HEK293 (cell line): ENCODE measurements at regions of chr19 and their contacts with region 1.

Region 1: DNA sequence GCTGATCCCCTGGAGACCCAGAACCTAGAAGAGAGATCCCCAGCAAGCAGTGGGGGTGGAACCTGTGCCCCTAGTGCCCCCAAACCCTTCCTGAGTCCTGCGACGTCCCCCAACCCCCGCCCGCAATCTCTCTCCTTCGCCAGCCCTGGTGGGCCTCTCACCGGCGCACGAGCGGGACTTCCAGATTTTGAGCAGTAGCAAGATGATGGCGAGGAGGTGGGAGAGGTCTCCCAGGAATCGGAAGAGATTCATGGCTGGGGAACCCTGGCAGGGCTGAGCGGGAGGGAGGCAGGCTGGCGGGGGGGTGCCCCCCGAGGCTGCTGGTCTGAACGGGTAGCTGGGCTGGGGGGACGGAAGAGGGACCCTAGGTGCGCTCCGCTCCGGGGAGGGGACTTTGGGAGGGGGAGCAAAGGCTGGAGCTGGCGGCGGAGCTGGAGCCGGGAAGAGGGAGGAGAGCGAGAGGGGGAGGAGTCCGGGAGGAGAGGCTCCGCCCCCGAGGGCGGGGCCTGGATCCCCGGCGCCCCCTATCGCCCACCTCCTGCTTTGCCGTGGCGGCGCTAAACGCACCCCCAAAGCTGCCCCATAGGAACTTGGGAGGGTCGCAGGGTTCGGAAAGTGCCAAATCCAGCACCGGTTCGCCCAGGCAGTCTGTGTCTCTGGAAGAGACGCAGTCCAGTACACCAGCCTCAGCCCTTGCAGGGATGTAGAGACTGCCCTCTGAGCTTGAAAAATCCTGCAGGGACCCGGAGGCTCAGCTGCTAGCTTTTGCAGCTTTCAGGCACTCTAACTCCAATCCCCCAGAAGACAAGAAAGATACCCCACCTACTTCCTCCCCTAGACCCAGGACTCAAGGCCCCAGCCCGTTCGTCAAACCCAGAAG is at the start of gene KDELR1:
- H3K4me3 ChIP-seq: peak within 1 kb of the TSS; percentile 86
- H3K27ac ChIP-seq: peak within 1 kb of the TSS; percentile 94
- H3K4me1 ChIP-seq: peaks cover 10% of the 10 kb centered on the region
- CTCF ChIP-seq: peak; percentile 95

Region 2: DNA sequence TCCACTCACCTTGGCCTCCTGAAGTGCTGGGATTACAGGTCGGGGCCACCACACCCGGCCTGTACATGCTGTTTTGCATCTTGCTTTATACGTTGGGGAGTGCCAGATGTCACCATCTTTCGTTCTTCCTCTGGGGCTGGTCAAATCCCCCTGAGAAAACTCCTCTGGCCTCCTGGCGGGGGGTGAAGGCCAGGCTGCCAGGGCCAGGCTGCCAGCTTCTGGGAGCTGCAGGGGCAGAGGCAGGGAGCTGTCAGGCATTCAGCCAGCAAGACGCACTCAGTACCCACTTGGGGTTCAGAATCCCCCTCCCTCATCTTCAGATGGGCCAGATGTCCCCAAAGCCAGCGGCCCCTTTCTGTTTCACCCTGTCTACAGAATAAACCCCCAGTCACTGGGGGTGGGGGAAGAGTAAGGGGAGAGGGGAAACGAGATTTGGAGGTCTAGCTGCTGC is 204.8 kb before region 1 on chr19:
- CTCF ChIA-PET with region 1: no interaction called
- POLR2A ChIA-PET with region 1: no interaction called
- H3K4me3 ChIP-seq: no peak overlapping the region
- H3K27ac ChIP-seq: no peak overlapping the region
- H3K4me1 ChIP-seq: no peaks in the 10 kb centered on the region
- CTCF ChIP-seq: no peak

Region 3: GRCh38 chr19:48332662-48333466 is 58.5 kb before region 1 on chr19:
- CTCF ChIA-PET with region 1: interaction called, 17 read pairs
- POLR2A ChIA-PET with region 1: interaction called, 8 read pairs
- H3K4me3 ChIP-seq: peak overlapping the region; percentile 26
- H3K27ac ChIP-seq: peak overlapping the region; percentile 85
- H3K4me1 ChIP-seq: peaks cover 15% of the 10 kb centered on the region
- CTCF ChIP-seq: no peak

Region 4: GRCh38 chr19:48363810-48364563 is 27.4 kb before region 1 on chr19 and contains the starts of genes SYNGR4 and TMEM143:
- CTCF ChIA-PET with region 1: interaction called, 28 read pairs
- POLR2A ChIA-PET with region 1: interaction called, 42 read pairs
- H3K4me3 ChIP-seq: peak within 1 kb of the TSS; percentile 54
- H3K27ac ChIP-seq: peak within 1 kb of the TSS; percentile 89
- H3K4me1 ChIP-seq: peaks cover 4% of the 10 kb centered on the region; the same call in 1 of the 2 replicates
- CTCF ChIP-seq: peak; percentile 34; the same call in 1 of the 2 replicates

Region 5: DNA sequence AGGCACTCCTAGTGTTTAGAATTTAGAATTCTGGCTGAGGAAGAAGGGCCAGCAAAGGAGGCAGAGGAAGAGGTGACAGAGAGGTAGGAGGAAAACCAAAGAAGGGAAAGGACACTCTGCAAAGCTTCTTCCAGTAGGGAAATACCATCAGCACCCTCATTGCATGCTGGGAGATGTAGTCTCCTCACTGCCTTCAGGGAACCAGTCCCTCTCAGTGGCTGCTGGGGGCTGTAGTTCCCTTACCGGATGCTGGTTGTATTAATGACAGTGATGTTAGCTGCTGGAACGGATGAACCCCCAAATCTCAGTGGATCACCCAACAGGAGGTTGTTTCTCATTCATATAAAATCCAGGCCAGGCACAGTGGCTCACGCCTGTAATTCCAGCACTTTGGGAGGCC is 12.3 kb after region 1 on chr19:
- CTCF ChIA-PET with region 1: interaction called, 69 read pairs
- POLR2A ChIA-PET with region 1: interaction called, 10 read pairs
- H3K4me3 ChIP-seq: no peak overlapping the region
- H3K27ac ChIP-seq: 0 out of 2 replicates have a peak overlapping the region, but pooled peaks have one; percentile 5
- H3K4me1 ChIP-seq: 0 out of 2 replicates have a peak, but pooled peaks cover 2% of the 10 kb centered on the region
- CTCF ChIP-seq: no peak

Region 6: DNA sequence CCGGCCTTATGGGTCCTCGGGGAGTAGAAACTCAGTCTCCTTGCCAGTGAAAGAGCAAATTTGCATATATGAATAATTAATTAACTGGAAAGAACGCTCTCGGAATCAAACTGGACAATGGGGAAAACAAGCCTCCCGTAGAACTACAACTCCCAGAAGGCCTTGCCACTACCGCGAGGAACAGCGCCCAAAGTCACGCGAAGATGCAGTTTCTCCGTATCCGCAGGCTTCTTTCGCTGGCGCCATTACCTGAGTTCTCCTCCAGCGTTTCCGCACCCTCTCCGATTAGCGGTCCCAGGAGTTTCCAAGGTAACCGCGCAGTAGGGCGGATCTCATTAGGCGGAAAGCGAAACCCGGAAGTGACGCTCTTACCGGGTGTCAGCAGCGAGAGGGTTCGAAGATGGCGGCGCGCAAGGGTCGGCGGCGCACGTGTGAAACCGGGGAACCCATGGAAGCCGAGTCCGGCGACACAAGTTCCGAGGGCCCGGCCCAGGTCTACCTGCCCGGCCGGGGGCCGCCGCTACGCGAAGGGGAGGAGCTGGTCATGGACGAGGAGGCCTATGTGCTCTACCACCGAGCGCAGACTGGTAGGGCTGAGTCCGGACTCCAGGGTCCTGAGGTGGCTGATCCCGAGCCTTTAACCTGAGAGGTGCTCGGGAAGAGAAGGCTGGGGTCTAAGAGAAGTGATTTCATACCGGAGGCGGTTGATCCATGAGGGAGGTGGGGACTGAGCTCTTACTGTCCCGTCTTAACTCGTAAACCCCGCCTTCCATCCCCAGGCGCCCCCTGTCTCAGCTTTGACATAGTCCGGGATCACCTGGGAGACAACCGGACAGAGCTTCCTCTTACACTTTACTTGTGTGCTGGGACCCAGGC is 54.5 kb after region 1 on chr19 and contains the start of gene GRWD1:
- CTCF ChIA-PET with region 1: interaction called, 13 read pairs
- POLR2A ChIA-PET with region 1: interaction called, 5 read pairs
- H3K4me3 ChIP-seq: peak within 1 kb of the TSS; percentile 88
- H3K27ac ChIP-seq: peak within 1 kb of the TSS; percentile 65
- H3K4me1 ChIP-seq: peaks cover 8% of the 10 kb centered on the region
- CTCF ChIP-seq: peak; percentile 18; the same call in 1 of the 2 replicates

Region 7: DNA sequence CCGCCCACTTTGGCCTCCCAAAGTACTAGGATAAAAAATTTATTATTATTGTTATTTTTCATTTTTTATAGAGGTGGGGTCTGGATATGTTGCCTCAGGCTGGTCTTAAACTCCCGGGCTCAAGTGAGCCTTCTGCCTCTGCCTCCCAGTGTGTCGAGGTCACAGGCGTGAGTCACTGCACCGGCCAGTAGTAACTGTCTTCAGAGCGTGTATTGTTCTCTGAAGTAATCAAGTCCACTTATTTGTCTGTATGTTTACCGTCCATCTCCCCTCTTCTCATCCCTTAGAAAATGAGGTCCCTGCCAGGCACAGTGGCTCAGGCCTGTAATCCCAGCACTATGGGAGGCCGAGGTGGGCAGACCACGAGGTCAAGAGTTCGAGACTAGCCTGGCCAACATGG is 142.4 kb after region 1 on chr19:
- CTCF ChIA-PET with region 1: no interaction called
- POLR2A ChIA-PET with region 1: no interaction called
- H3K4me3 ChIP-seq: no peak overlapping the region
- H3K27ac ChIP-seq: no peak overlapping the region
- H3K4me1 ChIP-seq: no peaks in the 10 kb centered on the region
- CTCF ChIP-seq: no peak